Activated T-helper 2 cell treated with anti-CD3 and anti-CD28 coated beads, Interferon-gamma antibody, Interleukin-2, Interleukin-4, amounts not matched to agents 10 μg/mL and 5 μg/mL and 100 μg/mL, durations not matched to agents 14 hours and 24 hours and 36 hours (primary cell): ENCODE measurements at regions of chr2 and their contacts with region 1.

Region 1: DNA sequence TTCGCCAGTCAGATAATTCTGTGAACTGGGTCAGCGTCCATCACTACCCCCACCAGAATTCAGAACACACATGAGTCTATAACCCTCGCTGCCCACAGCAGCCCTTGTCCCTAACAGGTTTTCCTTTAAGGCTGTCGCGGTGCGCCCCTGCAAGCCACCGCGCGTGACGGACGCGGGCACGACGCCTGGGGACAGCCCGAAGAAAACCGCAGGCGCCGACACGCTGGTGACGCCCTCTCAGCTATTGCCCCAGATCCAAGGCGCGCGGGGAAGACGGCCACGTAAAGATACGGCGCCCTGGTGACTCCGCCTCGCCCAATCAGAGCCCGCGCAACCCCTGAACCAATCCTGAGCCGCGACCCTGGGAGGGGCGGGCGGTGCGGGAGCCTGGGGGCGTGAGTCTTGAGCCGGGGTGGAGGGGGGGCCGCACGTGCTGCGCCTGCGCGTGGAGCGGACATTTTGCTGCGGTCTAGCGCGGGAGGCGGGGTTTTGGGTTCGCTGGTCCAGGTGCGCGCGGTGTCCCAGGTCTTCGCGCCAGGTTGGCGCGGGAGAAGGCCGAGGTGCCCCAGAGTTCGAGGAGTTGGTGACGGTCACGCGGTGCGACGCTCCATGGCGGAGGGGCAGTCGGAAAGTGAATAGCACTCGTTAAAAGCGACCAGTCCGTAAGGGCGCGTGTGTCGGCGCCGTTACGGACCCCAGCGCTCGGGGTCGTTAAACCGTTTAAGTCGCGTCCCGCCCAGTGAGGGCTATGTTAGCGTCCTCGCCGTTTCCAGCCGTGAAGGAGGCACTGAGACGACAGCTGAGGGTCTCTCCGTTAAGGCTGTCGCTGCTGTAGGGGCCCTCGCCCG is 15.9 kb downstream of the NMUR1 start:
- DNase-seq: peak; percentile 98
- H3K4me3 Mint-ChIP-seq: peak overlapping the region; percentile 95
- H3K27ac Mint-ChIP-seq: peak overlapping the region; percentile 98
- H3K4me1 Mint-ChIP-seq: peaks cover 14% of the 10 kb centered on the region
- H3K27me3 Mint-ChIP-seq: no peaks in the 10 kb centered on the region

Region 2: DNA sequence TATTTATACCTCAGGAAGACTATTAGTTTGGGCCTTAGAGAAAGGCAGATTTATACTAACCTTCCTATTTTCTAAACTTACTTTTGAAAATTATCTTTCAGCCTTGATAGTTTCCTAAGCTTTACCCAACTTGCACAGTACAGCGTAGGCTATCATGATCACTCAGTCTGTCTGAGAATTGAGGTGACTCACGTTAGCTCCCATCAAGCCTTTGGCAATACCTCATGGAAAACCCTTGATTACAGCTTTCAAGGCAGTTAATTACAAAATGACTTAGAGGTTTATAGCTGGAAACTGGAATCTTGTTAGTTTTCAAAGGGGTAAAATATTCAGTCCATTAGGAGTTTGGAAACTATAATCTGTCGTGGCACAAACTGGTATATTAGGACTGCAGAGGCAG is 342.3 kb before region 1 on chr2:
- intact Hi-C with region 1: no loop called
- DNase-seq: no peak
- H3K4me3 Mint-ChIP-seq: no peak overlapping the region
- H3K27ac Mint-ChIP-seq: no peak overlapping the region
- H3K4me1 Mint-ChIP-seq: peaks cover 22% of the 10 kb centered on the region
- H3K27me3 Mint-ChIP-seq: no peaks in the 10 kb centered on the region

Region 3: DNA sequence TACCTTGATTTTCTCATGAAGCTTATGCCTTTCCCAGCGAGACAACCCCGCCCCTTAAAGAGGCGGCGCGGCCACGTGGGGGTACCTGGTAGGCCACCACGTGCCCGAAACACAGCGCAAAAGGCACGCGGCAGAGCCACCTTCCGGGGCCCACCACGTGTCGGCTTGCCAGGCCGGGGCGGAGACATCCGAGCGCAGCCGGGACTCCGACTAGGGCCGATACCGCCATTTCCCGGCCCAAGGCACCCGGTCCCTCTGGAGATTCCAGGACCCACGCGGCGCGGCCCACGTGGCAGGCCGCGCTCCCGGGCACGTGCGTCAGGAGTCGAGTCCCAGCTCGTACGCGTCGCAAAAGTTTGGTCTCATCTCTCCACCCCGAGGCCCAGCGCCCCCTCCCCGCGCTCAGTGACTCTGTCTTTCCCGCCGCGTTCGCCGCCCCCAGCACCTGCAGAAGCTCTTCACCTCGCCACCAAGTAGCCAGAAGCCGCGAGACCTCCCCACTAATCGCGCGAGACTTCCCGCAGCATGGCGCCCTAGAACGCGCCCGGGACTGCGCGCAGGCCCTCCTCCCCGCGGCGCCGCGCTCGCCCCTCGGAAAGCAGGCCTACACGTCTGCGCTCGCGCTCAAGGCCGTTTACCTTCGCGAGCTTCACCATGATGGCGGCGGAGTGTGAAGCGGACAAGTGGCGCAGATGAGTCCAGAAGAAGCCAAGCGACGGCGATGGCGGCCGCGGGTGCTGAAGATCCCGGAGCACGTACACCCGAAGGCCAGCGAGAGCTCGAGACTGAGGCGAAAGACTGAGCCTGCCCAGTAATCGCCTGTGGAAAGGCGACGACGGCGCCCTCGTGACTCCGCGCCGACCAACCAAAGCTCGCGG is 50.4 kb before region 1 on chr2 and contains the start of gene NCL:
- intact Hi-C with region 1: loop called (anchors 1 kb)
- DNase-seq: peak; percentile 83
- H3K4me3 Mint-ChIP-seq: peak within 1 kb of the TSS; percentile 94
- H3K27ac Mint-ChIP-seq: peak within 1 kb of the TSS; percentile 98
- H3K4me1 Mint-ChIP-seq: peaks cover 31% of the 10 kb centered on the region
- H3K27me3 Mint-ChIP-seq: no peaks in the 10 kb centered on the region
- total RNA-seq, gene NCL: 1,292 and 1,329 TPM in 2 replicates

Region 4: GRCh38 chr2:231530091-231531011 is 16.0 kb after region 1 on chr2 and contains the start of gene NMUR1:
- intact Hi-C with region 1: loop called (anchors 2 kb)
- DNase-seq: peak; percentile 71
- H3K4me3 Mint-ChIP-seq: peak within 1 kb of the TSS; percentile 66
- H3K27ac Mint-ChIP-seq: no peak within 1 kb of the TSS
- H3K4me1 Mint-ChIP-seq: peaks cover 33% of the 10 kb centered on the region
- H3K27me3 Mint-ChIP-seq: peaks cover 9% of the 10 kb centered on the region
- total RNA-seq, gene NMUR1: 0.16 and 0.28 TPM in 2 replicates

Region 5: DNA sequence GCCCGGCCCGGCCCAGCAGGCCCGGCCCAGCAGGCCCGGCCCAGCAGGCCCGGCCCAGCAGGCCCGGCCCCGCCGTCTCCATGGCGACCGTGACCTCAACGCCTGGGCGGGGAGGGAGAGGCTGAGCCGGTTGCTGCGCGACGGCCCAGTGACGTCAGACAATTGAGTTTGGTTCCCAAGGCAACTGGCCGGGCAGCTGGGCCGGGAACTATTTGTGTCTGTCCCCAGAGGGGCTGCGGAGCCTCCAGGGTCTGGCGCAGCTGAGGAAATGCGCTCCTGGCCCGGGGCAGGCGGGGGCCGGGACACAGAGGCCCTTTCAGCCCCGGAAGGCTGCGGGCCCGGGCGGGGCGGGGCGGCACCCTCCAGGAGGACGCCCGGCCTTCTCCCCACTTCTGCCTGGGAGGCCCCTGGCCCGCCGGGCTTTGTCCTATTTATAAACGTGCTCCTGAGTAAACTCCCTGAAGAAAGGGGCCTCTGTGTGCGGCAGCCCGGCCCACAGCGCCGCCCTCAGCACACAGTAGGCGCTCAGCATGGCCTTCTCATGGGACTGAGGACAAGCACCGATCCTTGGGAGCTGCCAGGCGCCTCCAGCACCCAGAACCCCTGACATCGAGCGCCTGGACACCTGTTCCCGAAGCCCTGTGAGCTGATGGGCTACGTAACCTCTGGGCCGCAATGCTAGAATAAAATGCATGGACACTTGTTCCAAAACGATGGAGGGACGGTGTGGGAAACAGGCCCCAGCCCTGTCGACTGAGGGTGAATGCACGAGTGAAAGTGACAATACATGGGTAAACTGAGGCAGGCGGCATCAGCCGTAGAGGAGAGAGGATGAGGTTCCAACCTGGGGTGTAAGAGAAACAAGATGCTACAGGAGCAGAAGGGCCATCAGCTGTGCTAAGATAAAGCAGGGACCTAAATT is 90.6 kb after region 1 on chr2:
- intact Hi-C with region 1: loop called (anchors 1 kb)
- DNase-seq: peak; percentile 93
- H3K4me3 Mint-ChIP-seq: peak overlapping the region; percentile 62
- H3K27ac Mint-ChIP-seq: peak overlapping the region; percentile 66
- H3K4me1 Mint-ChIP-seq: peaks cover 3% of the 10 kb centered on the region
- H3K27me3 Mint-ChIP-seq: peaks cover 3% of the 10 kb centered on the region

Region 6: GRCh38 chr2:231706731-231707624 is 192.7 kb after region 1 on chr2:
- intact Hi-C with region 1: loop called (anchors 2 kb)
- DNase-seq: peak; percentile 97
- H3K4me3 Mint-ChIP-seq: peak overlapping the region; percentile 94
- H3K27ac Mint-ChIP-seq: peak overlapping the region; percentile 100
- H3K4me1 Mint-ChIP-seq: peaks cover 13% of the 10 kb centered on the region
- H3K27me3 Mint-ChIP-seq: no peaks in the 10 kb centered on the region